Sigmoid colon (tissue), 7 donors: ENCODE measurements at regions of chr20 and their contacts with region 1.

Region 1: GRCh38 chr20:63657937-63658748 is at the start of gene RTEL1:
- DNase-seq: peak; percentile 96
- H3K4me3 ChIP-seq: peak within 1 kb of the TSS; percentile 67 to 80 (median 70)
- H3K27ac ChIP-seq: peak within 1 kb of the TSS; percentile 88 to 92 (median 90)
- H3K4me1 ChIP-seq: peaks cover 0 to 39% (median 34%) of the 10 kb centered on the region in 4 donors
- H3K27me3 ChIP-seq: no peaks in the 10 kb centered on the region
- CTCF ChIP-seq: peak in 1 of 4 experiments; percentile 15
- EP300 ChIP-seq: no peak
- POLR2A ChIP-seq: peak; percentile 39 to 60
- total RNA-seq, gene RTEL1: 19.6 to 44.3 (median 31.4) TPM

Region 2: DNA sequence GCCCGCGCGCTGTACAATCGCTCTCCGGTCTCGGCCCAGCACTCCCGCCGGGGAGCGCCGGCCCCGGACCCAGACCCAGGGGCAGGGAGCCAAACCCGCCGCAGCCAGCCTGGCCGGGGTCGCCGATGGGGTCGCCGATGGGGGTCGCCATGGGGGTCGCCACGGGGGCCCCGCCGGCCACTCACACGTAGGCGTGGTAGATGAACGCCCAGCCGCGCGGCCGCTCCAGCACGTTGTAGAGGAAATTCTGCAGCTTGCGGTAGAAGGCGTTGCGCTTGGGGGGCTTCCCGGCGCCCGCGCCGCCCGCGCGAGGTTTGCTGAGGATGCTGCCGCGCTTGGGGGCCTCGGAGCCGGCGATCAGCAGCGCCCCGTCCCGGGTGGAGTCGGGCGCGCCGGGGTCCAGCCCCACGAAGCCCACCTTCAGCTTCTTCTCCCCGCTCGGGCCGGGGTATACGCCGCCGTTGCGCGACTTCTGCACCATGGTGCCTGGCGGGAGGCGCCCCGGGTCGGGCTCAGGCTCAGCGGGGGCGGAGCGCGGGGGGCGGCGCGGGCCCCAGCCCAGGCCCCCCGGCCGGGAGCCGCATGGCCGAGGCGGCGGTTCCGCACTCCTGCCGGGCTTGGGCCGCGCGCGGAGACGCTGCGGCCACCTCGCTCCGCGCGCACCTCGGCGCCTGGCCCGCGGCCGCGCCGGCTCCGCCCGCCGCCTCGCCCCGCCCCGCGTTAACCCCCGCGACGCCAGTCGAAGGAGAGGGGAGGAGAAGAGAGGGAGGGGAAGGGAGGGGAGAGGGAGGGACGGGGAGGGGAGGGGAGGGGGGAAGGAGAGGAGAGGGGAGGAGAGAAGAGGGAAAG is 185.9 kb before region 1 on chr20 and contains the start of gene KCNQ2:
- intact Hi-C with region 1: no loop called
- DNase-seq: no peak
- H3K4me3 ChIP-seq: peak within 1 kb of the TSS in 1 of 4 donors; percentile 15
- H3K27ac ChIP-seq: no peak within 1 kb of the TSS
- H3K4me1 ChIP-seq: peaks cover 0 to 13% (median 12%) of the 10 kb centered on the region in 4 donors
- H3K27me3 ChIP-seq: peaks cover 30 to 94% (median 68%) of the 10 kb centered on the region in 3 donors
- CTCF ChIP-seq: no peak
- EP300 ChIP-seq: no peak
- POLR2A ChIP-seq: no peak
- total RNA-seq, gene KCNQ2: 0.95 to 4.2 (median 1.4) TPM in 3 of 4 donors, not detected in the other

Region 3: DNA sequence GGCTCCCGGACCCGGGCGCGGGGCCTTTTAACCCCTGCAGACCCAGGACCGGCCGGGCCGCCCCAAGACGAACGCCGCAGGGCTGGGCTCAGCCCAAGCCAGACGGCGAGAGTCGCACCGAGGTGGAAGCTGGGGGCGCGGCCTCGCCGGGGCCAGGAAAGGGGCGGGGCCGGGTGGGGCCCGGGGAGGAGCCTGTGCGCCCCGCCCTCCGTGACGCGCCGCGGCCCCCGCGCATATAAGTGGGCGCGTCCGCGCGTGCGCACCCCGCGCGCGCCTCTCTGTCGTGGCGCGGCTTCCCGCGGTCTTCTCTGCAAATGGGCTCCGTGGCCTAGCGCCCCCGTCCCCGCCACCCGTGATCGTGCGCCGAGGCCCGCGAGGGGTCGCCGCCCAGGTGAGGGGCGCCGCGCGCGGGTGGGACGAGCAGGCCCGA is 137.6 kb before region 1 on chr20 and contains the start of gene PPDPF:
- intact Hi-C with region 1: loop called (anchors 5 kb)
- DNase-seq: peak; percentile 91
- H3K4me3 ChIP-seq: peak within 1 kb of the TSS; percentile 69 to 97 (median 94)
- H3K27ac ChIP-seq: peak within 1 kb of the TSS; percentile 89 to 98 (median 94)
- H3K4me1 ChIP-seq: peaks cover 0 to 36% (median 28%) of the 10 kb centered on the region in 4 donors
- H3K27me3 ChIP-seq: no peaks in the 10 kb centered on the region
- CTCF ChIP-seq: no peak
- EP300 ChIP-seq: no peak
- POLR2A ChIP-seq: peak in 1 of 2 donors; percentile 58
- total RNA-seq, gene PPDPF: 82.8 to 244 (median 146) TPM

Region 4: DNA sequence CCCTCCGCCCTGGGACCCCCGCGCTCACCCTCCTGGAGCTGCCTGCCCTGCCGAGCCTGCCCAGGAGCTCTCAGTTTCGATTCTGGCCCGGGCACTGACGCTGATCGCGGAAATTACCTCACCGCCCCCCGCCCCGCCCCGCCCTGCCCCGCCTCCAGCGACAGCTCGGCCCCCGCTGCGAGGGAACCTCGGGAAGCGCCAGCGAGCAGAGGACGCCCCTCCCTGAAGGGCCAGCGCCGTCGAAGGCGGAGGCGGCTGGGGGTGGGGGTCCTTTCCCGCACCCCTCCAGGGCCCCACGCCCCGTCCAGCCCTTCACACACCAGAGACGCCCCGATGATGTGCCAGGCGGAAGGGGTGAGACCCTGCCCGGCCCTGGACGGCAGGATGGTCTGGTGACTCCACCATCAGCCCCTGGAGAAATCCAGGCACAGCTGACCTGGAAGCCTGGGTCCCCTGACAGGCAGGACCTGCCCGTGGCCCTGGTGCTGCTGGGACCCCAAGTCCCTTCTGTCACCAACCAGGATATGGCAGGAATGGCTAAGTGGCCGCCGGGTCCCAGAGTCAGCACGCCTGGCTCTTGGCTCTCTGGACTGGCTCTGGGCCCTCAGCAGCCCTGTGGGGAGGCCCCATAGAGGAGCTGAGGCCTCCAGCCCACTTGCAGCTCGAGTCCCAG is 83.9 kb before region 1 on chr20 and contains the start of gene HELZ2:
- intact Hi-C with region 1: loop called (anchors 5 kb)
- DNase-seq: peak; percentile 90
- H3K4me3 ChIP-seq: peak within 1 kb of the TSS; percentile 88 to 97 (median 92)
- H3K27ac ChIP-seq: peak within 1 kb of the TSS; percentile 78 to 87 (median 81)
- H3K4me1 ChIP-seq: peaks cover 0 to 29% (median 27%) of the 10 kb centered on the region in 4 donors
- H3K27me3 ChIP-seq: no peaks in the 10 kb centered on the region
- CTCF ChIP-seq: no peak
- EP300 ChIP-seq: no peak
- POLR2A ChIP-seq: no peak
- total RNA-seq, gene HELZ2: 9.5 to 48.1 (median 15.4) TPM

Region 5: DNA sequence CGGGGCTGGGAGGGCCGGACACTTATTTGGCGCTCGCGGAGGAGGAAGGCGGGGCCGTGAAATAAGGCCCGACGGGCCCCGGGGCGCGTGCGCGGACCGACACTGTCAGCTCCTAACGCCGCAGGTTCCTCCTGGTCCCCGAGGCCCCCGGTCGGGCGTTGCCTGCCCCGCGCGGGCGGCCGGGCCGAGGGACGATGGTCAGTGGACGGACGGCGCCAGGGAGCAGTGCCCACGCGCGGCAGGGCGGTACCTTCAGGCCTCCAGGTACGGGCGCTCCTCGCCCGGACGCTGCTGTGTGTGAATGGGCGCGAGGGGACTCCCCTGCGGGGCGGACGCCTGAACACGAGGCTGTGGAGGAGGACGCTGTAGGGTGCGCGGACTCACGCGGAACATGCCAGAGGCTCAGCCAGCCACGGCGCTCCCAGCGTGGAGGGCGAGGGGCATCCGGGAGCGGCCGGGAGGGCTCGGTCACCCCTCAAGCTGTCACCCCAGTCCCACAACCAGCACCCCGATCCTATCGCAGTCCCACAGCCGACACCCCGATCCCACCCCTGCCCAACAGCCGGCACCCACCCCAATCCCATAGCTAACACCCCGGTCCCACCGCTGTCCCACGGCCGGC is 30.9 kb before region 1 on chr20:
- intact Hi-C with region 1: loop called (anchors 2 kb)
- DNase-seq: peak; percentile 98
- H3K4me3 ChIP-seq: peak overlapping the region; percentile 79 to 98 (median 90)
- H3K27ac ChIP-seq: peak overlapping the region; percentile 95 to 99 (median 96)
- H3K4me1 ChIP-seq: peaks cover 0 to 37% (median 21%) of the 10 kb centered on the region in 4 donors
- H3K27me3 ChIP-seq: no peaks in the 10 kb centered on the region
- CTCF ChIP-seq: no peak
- EP300 ChIP-seq: peak in 1 of 4 donors; percentile 5
- POLR2A ChIP-seq: peak; percentile 36 to 56

Region 6: GRCh38 chr20:63707549-63708300 is 49.6 kb after region 1 on chr20 and contains the starts of genes ARFRP1 and ZGPAT:
- intact Hi-C with region 1: loop called (anchors 5 kb)
- DNase-seq: peak; percentile 94
- H3K4me3 ChIP-seq: peak within 1 kb of the TSS; percentile 60 to 92 (median 78)
- H3K27ac ChIP-seq: peak within 1 kb of the TSS; percentile 87 to 93 (median 91)
- H3K4me1 ChIP-seq: peaks cover 0 to 29% (median 25%) of the 10 kb centered on the region in 4 donors
- H3K27me3 ChIP-seq: no peaks in the 10 kb centered on the region
- CTCF ChIP-seq: peak in 1 of 4 experiments; percentile 3
- EP300 ChIP-seq: peak in 1 of 4 donors; percentile 26
- POLR2A ChIP-seq: peak in 1 of 2 donors; percentile 11
- total RNA-seq, gene ARFRP1: 26.8 to 38.7 (median 28.8) TPM
- total RNA-seq, gene ZGPAT: 18.5 to 22.5 (median 19.6) TPM